ENCODE measurements at regions of chr17 and their contacts with region 1.

Region 1: DNA sequence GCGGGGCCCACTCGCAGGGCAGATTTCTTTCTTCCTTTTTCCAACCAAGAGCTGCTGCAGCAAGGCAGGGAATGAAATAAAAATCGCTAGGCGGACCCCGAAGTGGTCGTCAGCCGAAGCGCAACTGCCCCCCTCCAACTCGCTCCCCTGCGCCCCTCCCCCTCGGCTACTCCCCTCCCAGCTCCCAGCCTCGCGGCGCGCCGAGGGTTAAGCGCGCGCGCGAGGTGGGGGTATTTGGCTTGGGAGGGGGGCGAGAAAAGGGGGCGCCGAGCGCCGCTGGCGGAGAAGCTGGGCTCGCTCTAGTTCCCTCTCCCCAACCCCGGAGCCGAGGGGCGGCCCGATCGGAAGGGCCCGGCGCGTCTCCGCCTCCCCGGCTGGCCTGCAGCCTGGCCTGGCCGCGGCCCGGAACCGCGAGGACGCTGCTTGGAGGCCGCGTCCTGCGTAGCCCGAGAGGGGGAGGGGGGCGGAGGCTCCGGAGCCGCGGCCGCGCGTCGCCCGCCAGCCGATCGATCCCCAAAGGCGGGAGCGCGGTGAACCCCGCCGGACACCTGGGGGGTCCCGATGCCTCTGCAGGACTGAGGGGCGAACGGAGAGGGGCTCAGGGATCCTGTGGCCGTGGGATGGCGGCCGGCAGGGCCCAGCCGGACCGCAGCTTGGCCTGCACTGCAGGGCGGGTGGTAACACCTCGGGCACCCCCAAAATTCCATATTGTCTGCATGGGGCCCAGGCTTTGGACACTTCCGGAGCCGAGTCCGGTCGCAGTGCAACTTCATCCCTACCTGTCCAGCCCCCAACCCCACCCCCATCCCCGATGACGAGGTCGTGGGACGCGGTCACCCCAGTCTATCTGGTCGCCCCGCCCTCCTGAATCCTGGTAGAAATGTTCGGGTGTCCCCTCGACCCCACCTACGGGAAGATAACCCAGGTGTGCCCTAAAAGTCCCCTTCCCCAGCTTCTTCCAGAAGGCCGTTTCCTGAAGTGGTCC is 4.9 kb upstream of the CBX4 start:
- DNase-seq: peak in 1 of 2 donors; percentile 90
- H3K4me3 ChIP-seq: peak overlapping the region; percentile 27
- CTCF ChIP-seq: no peak
- POLR2A ChIP-seq: no peak

Region 2: DNA sequence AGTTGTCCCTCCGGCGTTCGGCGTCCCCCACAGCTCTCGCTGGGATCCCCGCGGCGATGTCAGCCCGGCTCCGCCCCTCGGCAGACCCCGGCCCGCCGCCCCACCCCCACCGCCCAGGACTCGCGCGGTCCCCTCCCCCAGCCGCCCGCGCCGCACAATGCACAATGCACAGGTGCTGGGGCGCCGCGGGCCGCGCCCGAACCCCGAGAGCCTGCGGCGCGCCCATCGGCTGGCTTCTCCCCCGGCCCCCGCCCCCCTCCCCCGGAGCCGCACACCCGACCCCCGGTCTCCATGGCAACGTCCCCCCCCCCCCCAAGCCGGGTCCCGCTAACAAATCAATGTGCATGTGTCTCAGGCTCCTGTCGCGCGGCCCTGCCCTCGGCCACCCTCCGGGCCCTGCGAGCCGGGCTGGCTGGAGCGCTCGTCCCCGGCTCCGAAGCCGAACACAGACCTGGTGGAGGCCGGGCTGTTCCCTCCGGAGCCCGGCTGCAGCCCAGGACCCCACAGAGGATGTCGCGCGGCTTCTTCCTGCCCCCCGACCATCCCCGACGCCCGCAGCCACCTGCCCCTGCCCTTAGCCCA is 46.5 kb before region 1 on chr17:
- intact Hi-C with region 1: loop called (anchors 2 kb)
- DNase-seq: peak in 1 of 2 donors; percentile 19
- H3K4me3 ChIP-seq: peak overlapping the region; percentile 10
- CTCF ChIP-seq: no peak
- POLR2A ChIP-seq: no peak

Measured in lower leg skin (tissue), 4 donors.